OCI-LY7 (cell line): ENCODE measurements at regions of chr17 and their contacts with region 1.

Region 1: DNA sequence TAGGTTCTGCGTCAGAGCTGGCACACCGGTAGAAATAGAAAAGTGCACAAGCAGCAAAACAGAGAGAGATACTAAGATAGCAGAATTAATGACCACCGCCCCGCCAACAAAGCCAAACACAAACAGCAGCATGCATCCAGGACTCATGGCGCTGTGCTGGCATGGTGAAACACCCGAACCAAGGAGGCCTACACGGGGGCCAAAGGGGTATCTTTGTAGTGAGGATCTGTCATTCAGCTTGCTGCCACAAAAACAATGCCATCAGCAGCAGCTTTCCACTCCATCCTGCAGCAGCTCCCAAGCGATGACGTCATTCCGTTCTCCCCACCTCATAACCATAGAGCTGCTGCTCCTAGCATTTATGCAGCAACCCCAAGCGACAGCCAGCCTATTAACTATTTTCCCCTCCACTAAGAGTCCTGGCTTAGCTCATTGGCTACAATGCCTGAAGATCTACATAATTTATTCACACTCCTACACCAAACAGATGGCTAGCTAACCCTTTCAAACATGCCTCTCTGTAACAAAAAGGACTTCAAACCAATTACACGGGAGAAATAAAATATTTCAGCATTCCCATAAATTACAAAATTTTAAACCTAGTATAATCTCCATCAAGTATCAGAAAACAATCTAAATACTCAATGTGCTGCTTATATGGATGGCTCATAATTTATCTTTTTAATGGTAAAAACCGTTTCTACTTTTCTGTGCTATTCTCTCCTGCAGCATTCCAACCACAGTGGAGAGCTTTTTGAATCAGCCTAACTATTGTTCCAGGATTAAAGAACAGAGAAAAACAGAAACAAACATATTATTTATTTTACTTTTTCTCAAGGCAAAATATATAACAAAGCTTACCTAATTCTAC is 73.9 kb downstream of the SPAG9 start:
- DNase-seq: no peak
- H3K4me3 ChIP-seq: no peak overlapping the region
- H3K27ac ChIP-seq: no peak overlapping the region
- H3K4me1 ChIP-seq: peaks cover 19% of the 10 kb centered on the region
- CTCF ChIP-seq: no peak

Region 2: GRCh38 chr17:51028176-51028863 is 18.4 kb before region 1 on chr17:
- CTCF ChIA-PET with region 1: no interaction called
- POLR2A ChIA-PET with region 1: interaction called, 16 read pairs
- intact Hi-C with region 1: no loop called
- DNase-seq: no peak
- H3K4me3 ChIP-seq: no peak overlapping the region
- H3K27ac ChIP-seq: no peak overlapping the region
- H3K4me1 ChIP-seq: peaks cover 22% of the 10 kb centered on the region
- CTCF ChIP-seq: no peak